ENCODE measurements at regions of chr4 and their contacts with region 1.

Region 1: GRCh38 chr4:186770481-186771175 is 47.0 kb upstream of the FAT1 start:
- DNase-seq: no peak
- H3K4me3 ChIP-seq: no peak overlapping the region
- H3K27ac ChIP-seq: no peak overlapping the region
- H3K4me1 ChIP-seq: no peaks in the 10 kb centered on the region
- H3K27me3 ChIP-seq: no peaks in the 10 kb centered on the region
- CTCF ChIP-seq: no peak
- POLR2A ChIP-seq: no peak

Region 2: DNA sequence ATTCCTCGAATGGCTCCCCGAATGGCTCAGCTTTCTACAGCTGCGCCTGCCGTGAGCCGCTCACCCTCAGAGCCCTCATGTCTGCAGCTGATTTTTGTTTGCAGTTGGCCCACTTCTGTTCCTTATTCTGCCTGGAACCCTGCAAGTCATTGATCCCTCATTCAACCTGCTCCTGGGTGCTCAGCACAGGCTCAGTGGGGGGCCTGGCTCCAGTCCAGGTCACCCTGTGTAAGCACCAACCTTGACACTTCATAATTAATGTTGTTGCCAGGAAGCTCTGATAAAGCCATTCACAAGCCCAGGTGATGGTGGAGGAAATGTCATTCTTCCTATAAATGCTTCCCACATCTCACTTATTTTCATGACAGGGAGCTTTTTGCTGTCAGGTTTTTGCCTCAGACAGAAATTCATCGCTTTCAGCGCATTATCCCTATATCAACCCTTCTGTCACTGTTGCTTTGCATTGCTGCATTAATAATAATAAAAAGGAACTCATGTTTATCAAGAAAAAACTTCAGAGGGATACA is 418.9 kb before region 1 on chr4:
- intact Hi-C with region 1: no loop called
- DNase-seq: no peak
- H3K4me3 ChIP-seq: no peak overlapping the region
- H3K27ac ChIP-seq: no peak overlapping the region
- H3K4me1 ChIP-seq: no peaks in the 10 kb centered on the region
- H3K27me3 ChIP-seq: no peaks in the 10 kb centered on the region
- CTCF ChIP-seq: no peak
- POLR2A ChIP-seq: no peak

Region 3: DNA sequence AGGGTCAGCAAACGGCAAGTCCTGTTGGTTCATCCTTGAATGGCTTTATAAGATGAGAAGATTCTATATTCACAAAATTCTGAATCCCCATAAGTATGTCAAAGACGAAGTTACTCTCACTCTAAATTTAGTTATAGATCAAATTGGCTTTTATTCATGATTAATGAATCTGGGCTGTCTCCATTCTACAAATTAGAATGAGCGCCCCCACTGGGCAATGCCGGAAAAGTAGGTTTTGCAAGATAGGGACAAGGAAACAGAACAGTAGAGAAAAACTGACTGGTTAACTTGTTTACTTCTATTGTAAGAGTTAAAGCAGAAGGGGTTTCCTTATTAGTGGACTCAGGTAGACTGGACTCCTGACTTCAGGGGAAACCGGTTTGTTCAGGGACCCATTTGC is 404.3 kb before region 1 on chr4:
- intact Hi-C with region 1: loop called (anchors 5 kb)
- DNase-seq: no peak
- H3K4me3 ChIP-seq: no peak overlapping the region
- H3K27ac ChIP-seq: no peak overlapping the region
- H3K4me1 ChIP-seq: no peaks in the 10 kb centered on the region
- H3K27me3 ChIP-seq: no peaks in the 10 kb centered on the region
- CTCF ChIP-seq: no peak
- POLR2A ChIP-seq: no peak

Region 4: GRCh38 chr4:187983746-187984145 is 1213.1 kb after region 1 on chr4:
- intact Hi-C with region 1: no loop called
- DNase-seq: no peak
- H3K4me3 ChIP-seq: no peak overlapping the region
- H3K27ac ChIP-seq: no peak overlapping the region
- H3K4me1 ChIP-seq: no peaks in the 10 kb centered on the region
- H3K27me3 ChIP-seq: no peaks in the 10 kb centered on the region
- CTCF ChIP-seq: no peak
- POLR2A ChIP-seq: no peak